Heart left ventricle (tissue), 16 donors: ENCODE measurements at regions of chr21 and their contacts with region 1.

Region 1: GRCh38 chr21:33968080-33968994 is 52.7 kb upstream of the ATP5PO start:
- DNase-seq: peak in 1 of 5 donors; percentile 38
- ATAC-seq: peak; percentile 30 to 85 (median 75)
- H3K4me3 ChIP-seq: no peak overlapping the region
- H3K27ac ChIP-seq: peak overlapping the region in 10 of 12 donors; percentile 8 to 73 (median 51)
- H3K4me1 ChIP-seq: peaks cover 2 to 37% (median 21%) of the 10 kb centered on the region in 12 donors
- H3K27me3 ChIP-seq: no peaks in the 10 kb centered on the region
- CTCF ChIP-seq: no peak
- POLR2A ChIP-seq: no peak

Region 2: DNA sequence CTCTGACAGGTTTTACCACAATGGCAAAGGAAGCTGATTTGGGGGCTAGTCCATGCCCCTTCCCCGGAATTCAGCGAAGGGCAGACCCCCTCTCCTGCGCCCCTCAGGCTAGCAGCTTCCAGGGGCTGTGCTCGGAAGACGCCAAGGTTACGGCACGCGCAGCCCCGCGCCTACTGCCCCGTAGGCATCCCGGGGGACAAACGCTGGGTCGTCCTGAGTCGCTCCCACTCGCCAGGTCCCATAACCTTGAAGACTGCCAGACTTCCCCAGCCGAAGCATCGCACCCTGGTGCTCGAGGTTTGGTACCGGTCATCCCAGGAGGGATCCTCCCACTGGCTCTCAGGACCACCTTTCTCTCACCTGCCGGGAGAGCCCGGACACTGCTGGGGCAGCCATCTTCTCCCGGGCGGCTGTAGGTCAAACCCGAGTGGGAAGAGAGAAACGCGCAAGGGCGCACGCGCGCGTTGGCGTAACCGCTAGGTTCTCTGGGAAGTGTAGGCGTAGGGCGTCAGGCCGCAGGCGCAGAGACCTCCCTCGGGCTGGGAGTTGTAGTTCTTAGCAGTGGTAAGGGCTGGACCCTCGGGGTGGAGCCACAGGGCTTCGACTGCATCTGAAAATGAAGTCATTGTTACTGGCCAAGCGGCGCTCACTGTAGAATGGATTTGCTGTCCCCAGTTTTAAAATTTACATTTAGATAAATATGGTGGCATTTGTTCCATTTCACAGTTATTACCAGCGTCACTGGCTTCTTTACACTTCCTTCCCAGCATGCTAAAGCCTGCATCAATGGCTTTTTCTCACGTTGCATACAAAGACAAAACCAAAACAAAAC is 52.8 kb before region 1 on chr21 and contains the start of gene ATP5PO:
- intact Hi-C with region 1: no loop called
- DNase-seq: peak; percentile 97 to 99 (median 99)
- ATAC-seq: peak; percentile 99 to 100 (median 100)
- H3K4me3 ChIP-seq: peak within 1 kb of the TSS; percentile 63 to 98 (median 90)
- H3K27ac ChIP-seq: peak within 1 kb of the TSS; percentile 77 to 99 (median 93)
- H3K4me1 ChIP-seq: peaks cover 0 to 40% (median 22%) of the 10 kb centered on the region in 12 donors
- H3K27me3 ChIP-seq: no peaks in the 10 kb centered on the region
- CTCF ChIP-seq: peak in 1 of 12 donors; percentile 6
- POLR2A ChIP-seq: peak; percentile 44 to 92
- total RNA-seq, gene ATP5PO: 472 to 1,228 (median 735) TPM

Region 3: GRCh38 chr21:34011660-34012059 is 43.3 kb after region 1 on chr21:
- intact Hi-C with region 1: loop called in 1 of 10 experiments (anchors 5 kb)
- DNase-seq: no peak
- ATAC-seq: no peak
- H3K4me3 ChIP-seq: no peak overlapping the region
- H3K27ac ChIP-seq: no peak overlapping the region
- H3K4me1 ChIP-seq: no peaks in the 10 kb centered on the region
- H3K27me3 ChIP-seq: no peaks in the 10 kb centered on the region
- CTCF ChIP-seq: no peak
- POLR2A ChIP-seq: no peak

Region 4: DNA sequence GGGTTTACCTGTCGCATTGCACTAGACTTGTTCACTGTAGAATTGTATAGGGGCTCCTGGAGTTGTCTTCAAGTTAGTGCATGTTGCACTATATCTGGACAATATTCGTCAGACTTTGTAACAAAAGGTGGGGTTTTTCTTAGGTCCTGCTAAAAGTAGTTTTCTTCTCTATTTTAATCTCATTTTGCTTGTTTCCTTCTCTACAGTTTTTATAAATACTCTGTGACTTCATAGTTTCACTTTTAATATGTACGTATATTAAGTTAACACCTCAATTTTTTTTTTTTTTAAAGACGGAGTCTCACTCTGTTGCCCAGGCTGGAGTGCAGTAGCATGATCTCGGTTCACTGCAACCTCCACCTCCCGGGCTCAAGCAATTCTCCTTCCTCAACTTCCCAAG is 78.6 kb after region 1 on chr21:
- intact Hi-C with region 1: no loop called
- DNase-seq: no peak
- ATAC-seq: no peak
- H3K4me3 ChIP-seq: no peak overlapping the region
- H3K27ac ChIP-seq: no peak overlapping the region
- H3K4me1 ChIP-seq: no peaks in the 10 kb centered on the region
- H3K27me3 ChIP-seq: no peaks in the 10 kb centered on the region
- CTCF ChIP-seq: no peak
- POLR2A ChIP-seq: no peak